A673 (cell line): ENCODE measurements at regions of chr9 and their contacts with region 1.

Region 1: DNA sequence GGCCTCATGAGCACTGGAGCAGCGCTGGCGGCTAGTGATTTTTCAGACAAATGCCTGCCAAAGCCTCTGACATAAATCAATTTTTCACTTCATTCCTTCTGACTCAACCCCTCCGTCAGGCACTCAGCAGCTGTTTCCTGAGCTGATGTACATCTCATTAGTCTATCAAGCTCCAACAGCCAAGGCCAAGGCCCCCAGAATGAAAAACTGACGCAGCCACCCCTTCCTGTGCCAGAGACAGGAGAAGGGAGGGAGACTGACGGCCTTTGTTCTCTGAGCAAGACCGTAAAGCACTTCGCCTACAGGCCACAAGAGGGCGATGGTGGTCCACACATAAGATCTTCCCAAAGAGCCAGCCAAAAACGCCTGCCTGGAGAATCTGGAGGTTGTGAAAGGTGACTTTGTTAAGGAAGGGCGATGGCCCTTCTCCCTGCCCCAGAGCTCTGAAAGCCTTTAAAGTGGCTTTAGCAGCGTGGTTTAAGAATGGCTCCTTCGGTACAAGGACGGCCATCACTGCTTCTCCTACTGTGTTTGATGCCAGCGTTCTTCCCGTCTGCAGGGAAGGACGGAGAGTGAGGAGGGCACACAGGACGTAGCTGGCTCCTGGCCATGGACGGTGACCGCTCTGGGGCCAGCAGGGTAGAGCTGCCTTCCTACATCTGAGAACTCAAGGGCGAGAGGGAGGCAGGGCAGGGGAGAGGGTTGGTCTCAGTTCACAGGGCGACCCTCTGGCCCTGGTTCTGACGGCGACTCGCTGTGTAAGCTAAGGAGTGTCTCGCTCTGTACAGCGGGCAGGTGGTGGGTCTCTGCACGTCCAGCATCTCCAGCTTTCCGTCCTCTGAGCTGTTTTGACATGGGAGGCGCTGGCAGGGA is 37.0 kb downstream of the ALG2 start:
- DNase-seq: peak; percentile 95
- H3K4me3 ChIP-seq: no peak overlapping the region
- H3K27ac ChIP-seq: no peak overlapping the region
- H3K4me1 ChIP-seq: peaks cover 15% of the 10 kb centered on the region
- H3K27me3 ChIP-seq: no peaks in the 10 kb centered on the region
- CTCF ChIP-seq: peak; percentile 94

Region 2: DNA sequence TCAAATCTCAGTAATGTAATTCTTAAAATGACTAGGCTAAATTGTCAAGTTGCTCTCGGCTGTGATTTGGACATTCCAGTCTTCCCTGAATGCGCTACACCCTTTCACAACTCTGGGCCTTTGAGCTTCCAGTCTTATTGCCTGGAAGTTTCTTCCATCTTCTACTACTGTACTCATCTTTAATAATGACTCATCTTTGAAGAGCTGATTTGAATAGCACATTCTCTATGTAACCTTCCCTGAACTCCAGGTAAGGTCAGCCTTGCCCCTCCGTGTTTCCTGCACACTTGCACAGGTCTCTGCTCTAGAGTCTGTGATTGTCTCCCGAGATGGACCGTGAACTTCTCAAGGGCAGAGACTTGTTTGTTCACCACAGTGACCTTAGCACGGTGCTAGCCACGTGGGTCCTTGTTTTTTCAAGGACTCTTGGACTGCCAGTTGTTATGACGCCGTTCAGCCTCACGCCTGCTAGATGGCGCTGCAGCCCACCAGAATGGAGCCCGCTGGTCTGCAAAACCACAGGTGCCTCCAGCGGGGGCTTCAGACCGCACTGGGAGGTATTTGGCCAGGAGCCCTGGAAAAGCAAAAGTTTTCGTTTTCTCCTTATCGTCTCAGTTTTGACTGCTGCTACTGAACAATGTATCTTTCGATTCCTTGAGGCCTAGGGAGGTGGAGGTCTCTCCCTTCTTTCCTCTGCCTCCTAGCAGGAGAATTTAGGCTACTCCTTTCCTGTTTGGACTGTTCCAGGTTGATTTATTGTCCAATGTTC is 81.7 kb after region 1 on chr9:
- CTCF ChIA-PET with region 1: no interaction called
- POLR2A ChIA-PET with region 1: no interaction called
- intact Hi-C with region 1: loop called (anchors 10 kb)
- DNase-seq: peak; percentile 85
- H3K4me3 ChIP-seq: no peak overlapping the region
- H3K27ac ChIP-seq: no peak overlapping the region
- H3K4me1 ChIP-seq: peaks cover 14% of the 10 kb centered on the region
- H3K27me3 ChIP-seq: no peaks in the 10 kb centered on the region
- CTCF ChIP-seq: peak; percentile 94

Region 3: DNA sequence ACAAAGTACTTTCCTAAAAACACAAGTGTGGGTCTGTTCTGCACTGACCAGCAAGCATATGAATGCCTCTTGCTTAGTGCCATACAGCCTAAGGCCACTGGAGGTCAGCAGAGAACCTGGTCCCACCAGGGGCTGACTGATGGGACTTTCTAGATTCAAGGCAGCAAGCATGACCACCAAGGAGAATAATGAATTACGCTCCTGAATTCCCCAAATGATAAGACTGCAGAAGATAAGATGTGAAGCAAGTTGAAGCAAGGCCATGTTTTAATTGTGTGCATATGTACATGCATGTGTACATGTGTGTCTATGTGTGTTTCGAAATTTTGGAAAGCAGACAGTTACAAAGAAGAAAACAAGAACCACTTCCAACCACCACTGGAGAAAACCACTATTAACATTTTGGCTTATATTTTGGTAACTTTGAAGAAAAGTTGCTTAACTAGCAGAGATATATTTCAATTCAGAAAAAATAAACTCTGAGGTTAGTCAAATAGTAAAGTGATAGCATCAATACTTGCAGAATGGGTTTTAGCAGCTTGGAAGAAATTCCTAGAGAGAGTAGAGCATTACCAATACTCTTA is 843.6 kb after region 1 on chr9:
- CTCF ChIA-PET with region 1: no interaction called
- POLR2A ChIA-PET with region 1: no interaction called
- intact Hi-C with region 1: loop called (anchors 10 kb)
- DNase-seq: peak; percentile 81
- H3K4me3 ChIP-seq: no peak overlapping the region
- H3K27ac ChIP-seq: no peak overlapping the region
- H3K4me1 ChIP-seq: peaks cover 20% of the 10 kb centered on the region
- H3K27me3 ChIP-seq: no peaks in the 10 kb centered on the region
- CTCF ChIP-seq: peak; percentile 94

Region 4: DNA sequence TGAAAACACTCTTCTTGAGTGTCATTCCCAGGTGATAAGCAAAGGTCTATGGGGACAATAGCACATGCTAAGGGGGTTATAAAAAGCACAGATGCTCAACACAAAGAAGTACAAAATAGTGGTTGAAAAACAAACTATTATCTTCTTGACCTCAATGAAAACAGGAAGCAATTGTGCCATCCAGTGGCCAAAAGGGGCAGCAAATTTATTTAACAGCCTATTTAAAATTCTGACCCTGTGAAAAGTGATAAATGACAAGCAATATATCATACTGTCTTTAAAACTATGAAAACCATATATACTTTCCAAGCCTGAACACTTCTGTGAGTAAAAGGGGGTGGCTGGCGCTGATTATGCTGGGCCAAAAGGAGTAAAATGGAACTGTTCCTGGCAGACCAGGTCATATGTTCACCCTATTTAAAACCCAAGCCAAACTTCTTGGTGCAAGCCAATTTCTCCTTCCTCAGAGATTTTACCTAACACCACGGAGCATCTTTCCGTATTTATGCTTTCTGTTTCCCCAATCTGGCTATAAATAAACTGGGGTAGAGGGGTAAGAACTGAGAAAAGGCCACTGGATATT is 1138.3 kb after region 1 on chr9:
- CTCF ChIA-PET with region 1: interaction called, 3 read pairs
- POLR2A ChIA-PET with region 1: no interaction called
- intact Hi-C with region 1: loop called (anchors 2 kb)
- DNase-seq: peak; percentile 65
- H3K4me3 ChIP-seq: no peak overlapping the region
- H3K27ac ChIP-seq: no peak overlapping the region
- H3K4me1 ChIP-seq: no peaks in the 10 kb centered on the region
- H3K27me3 ChIP-seq: no peaks in the 10 kb centered on the region
- CTCF ChIP-seq: peak; percentile 78